GM10248 (cell line): ENCODE measurements at regions of chr1 and their contacts with region 1.

Region 1: DNA sequence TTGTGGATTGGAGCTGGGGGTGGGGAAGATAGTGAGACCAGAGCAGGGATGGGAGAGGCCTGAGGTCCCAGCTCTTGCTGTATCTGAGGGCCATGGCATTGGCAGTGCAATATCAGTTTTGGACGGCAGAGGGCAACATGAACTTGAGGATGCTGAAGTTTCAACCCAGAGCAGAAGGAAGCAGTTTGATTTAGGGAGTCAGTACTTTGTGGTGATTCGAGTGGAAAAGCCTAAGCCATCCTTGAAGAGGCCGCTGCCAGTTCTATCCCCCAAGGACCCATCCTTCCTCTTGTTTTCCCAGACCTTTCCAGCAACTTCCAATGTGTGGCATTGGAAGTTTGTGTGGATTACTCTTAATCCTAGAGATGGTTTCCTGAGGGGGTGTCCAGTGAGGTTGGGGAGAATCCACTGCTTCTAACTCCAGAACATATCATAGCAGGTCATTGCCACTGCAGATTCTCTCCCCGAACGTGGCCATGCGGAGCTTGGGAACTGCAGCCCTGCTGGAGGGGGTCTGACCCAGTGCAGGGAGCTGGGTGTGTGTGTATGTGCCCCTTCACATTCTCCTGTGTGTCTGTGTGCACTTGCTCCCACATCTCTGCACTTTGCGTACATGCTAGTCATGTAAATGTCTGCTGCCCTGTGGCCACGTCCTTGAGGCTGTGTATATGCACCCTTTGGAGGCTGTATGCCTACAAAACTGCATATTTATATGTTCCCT is 24.1 kb downstream of the SLC26A9 start:
- DNase-seq: peak; percentile 78
- CTCF ChIP-seq: peak; percentile 94

Region 2: GRCh38 chr1:205870236-205870635 is 49.0 kb before region 1 on chr1:
- CTCF ChIA-PET with region 1: no interaction called
- POLR2A ChIA-PET with region 1: no interaction called
- DNase-seq: no peak
- CTCF ChIP-seq: no peak

Region 3: DNA sequence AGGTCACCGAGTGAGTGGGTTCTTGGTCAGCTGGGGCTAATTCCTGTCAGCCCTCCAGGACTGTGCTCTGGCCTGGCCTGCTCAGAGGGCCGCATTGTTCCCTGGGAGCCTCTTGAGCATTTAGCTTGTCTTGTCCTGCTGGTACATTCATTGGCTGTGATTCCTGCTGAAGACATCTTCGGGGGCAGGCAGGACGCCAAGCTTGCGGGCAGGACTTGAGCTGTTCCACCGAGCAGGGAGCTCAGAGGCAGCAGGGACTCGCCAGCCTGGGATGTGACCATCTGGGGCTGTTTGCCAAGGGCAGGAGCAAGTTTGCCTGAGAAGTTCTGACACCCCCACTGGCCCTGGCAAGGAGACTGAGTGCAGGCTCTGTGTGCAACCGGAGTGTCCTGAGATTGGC is 31.1 kb after region 1 on chr1:
- CTCF ChIA-PET with region 1: interaction called, 12 read pairs
- POLR2A ChIA-PET with region 1: no interaction called
- DNase-seq: no peak
- CTCF ChIP-seq: no peak

Region 4: GRCh38 chr1:205961405-205961804 is 42.2 kb after region 1 on chr1:
- CTCF ChIA-PET with region 1: interaction called, 19 read pairs
- POLR2A ChIA-PET with region 1: no interaction called
- DNase-seq: peak; percentile 57
- CTCF ChIP-seq: no peak